ENCODE measurements at regions of chr5 and their contacts with region 1.

Region 1: DNA sequence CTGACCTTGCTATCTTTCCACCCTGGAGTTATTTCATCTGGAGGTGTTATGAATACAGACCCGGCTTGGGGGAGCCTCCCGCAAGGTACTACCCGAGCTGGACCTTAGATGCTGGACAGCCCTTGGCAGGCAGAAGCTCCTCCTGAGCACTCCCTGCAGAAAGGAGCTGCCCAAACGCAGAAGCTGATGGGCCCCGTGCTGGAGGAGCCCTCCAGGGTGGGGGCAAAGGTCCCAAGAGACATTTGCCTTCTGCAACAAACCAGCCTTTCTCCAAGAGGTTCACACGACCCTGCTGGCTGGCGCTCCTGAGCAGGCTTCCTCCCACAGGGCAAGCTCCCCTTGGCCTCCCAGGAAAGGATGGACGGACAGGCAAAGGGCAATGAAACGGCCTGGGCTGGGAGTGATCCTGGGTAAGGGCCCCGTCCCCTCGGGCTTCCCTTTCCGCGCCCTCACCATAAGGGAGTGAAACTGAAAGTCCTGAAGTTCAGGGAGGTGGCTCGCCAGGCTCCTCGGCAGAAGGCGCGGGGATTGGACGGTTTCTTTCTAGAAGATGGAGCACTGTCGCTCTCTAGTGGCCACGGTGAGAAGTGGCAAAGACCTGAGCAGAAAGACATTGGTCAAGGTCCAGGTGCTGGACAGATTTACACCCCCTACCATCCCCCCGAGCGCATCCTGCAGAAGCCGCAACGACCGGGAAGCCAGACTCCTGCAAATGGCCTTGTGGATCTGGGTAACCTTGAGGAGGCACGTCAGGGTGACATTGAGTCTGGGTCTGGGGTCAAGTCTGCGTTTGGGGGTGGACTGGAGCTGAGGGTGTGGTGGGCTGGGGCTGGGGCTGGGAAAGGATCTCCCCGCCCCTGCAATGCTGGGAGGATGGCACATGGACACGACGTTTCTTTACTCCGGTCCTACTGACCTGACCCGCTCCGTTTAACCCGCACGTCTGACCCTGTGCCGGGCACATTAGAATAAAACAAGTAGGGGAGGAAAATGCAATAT is 56.4 kb downstream of the NEURL1B start:
- DNase-seq: peak; percentile 94
- H3K4me3 Mint-ChIP-seq: peak overlapping the region; percentile 82
- H3K27ac Mint-ChIP-seq: peak overlapping the region; percentile 82
- H3K4me1 Mint-ChIP-seq: peaks cover 17% of the 10 kb centered on the region
- H3K27me3 Mint-ChIP-seq: peaks cover 14% of the 10 kb centered on the region
- CTCF ChIP-seq: peak; percentile 99

Region 2: DNA sequence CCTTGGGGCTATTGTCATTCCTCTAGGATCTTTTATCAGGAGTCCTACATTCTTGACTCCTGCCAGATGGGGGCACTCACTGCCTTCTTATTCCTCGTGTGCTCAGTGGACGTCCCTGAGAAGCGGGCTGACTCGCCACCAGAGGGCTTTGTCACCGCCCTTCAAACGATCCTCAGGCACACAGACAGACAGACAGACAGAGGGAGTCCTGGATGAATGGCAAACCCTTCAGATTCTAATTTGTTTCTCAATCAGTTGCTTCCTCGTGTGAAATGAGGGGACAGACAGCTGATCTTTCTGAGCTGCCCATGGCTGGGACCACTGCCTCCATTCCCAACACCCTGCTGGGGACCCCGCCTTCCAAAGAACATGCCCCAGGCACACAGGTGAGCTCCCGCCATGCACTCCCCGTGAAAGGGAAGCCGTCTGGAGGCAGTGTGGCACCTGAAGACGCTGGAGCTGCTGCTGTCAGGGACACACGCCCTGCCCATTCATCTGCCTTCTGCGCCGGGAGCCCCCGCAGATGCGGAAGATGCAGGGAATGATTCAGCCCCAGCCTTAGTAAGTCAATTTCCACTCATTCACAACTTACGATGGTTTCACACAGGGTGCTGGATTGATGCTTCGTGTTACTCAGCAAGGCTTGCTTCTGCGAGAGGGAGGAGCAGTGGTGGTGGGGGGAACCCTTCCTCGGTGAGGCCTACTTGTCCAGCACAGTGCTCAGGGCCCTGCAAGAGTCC is 218.2 kb before region 1 on chr5:
- CTCF ChIA-PET with region 1: interaction called, 452 read pairs
- POLR2A ChIA-PET with region 1: interaction called, 9 read pairs
- intact Hi-C with region 1: loop called (anchors 1 kb)
- DNase-seq: peak; percentile 98
- H3K4me3 Mint-ChIP-seq: no peak overlapping the region
- H3K27ac Mint-ChIP-seq: no peak overlapping the region
- H3K4me1 Mint-ChIP-seq: peaks cover 25% of the 10 kb centered on the region
- H3K27me3 Mint-ChIP-seq: no peaks in the 10 kb centered on the region
- CTCF ChIP-seq: peak; percentile 92

Region 3: DNA sequence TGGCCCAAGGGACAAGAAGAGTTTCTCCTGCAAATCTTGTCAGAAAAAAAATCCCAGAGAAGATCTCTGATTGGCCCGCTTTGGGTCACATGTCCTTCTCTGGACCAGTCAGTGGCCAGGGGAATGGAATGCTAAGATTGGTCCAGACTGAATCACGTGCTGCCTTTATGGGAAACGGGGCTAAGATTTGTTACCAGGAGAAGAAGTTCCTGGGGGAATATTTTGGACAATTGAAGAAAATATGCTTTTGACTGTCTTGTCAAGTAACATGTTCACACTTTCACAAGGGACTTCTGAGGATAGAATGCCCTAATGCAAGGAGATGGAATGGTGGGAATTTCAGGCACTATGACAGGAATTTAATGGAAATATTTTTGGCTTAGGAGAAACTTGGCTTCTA is 169.0 kb before region 1 on chr5:
- CTCF ChIA-PET with region 1: interaction called, 16 read pairs
- POLR2A ChIA-PET with region 1: interaction called, 6 read pairs
- intact Hi-C with region 1: no loop called
- DNase-seq: no peak
- H3K4me3 Mint-ChIP-seq: no peak overlapping the region
- H3K27ac Mint-ChIP-seq: no peak overlapping the region
- H3K4me1 Mint-ChIP-seq: peaks cover 14% of the 10 kb centered on the region
- H3K27me3 Mint-ChIP-seq: no peaks in the 10 kb centered on the region
- CTCF ChIP-seq: no peak

Region 4: DNA sequence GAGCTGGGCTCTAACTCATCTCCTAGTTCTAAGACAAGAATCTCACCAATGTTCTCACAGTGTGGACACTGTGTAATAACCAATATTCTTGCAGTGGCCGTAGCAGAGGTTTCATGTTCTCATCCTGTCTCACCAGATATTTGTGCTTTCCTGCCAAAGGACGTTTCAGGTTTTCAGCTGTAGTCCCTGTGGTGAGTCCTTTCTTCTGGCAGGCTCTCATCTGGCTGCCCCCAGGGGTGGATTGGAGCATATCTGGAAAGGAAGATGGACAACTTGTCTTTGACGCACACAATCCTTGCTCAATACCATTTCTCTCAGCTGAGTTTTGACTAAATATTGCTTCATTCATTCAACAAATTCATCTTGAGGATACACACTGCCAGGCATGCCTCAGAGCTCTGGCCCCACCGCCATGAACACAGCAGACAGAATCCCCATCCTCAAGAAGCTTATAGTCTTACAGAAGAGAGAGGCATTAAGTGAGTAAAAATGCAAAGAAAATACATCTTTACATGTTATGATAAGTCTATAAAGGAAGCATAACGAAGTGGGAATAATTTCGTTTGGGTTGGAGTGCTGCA is 90.1 kb before region 1 on chr5:
- CTCF ChIA-PET with region 1: interaction called, 13 read pairs
- POLR2A ChIA-PET with region 1: no interaction called
- intact Hi-C with region 1: no loop called
- DNase-seq: peak; percentile 98
- H3K4me3 Mint-ChIP-seq: peak overlapping the region; percentile 1
- H3K27ac Mint-ChIP-seq: peak overlapping the region; percentile 40
- H3K4me1 Mint-ChIP-seq: peaks cover 10% of the 10 kb centered on the region
- H3K27me3 Mint-ChIP-seq: no peaks in the 10 kb centered on the region
- CTCF ChIP-seq: no peak

Region 5: GRCh38 chr5:172659909-172660628 is 37.4 kb before region 1 on chr5:
- CTCF ChIA-PET with region 1: interaction called, 11 read pairs
- POLR2A ChIA-PET with region 1: interaction called, 3 read pairs
- intact Hi-C with region 1: no loop called
- DNase-seq: no peak
- H3K4me3 Mint-ChIP-seq: no peak overlapping the region
- H3K27ac Mint-ChIP-seq: peak overlapping the region; percentile 3
- H3K4me1 Mint-ChIP-seq: peaks cover 15% of the 10 kb centered on the region
- H3K27me3 Mint-ChIP-seq: no peaks in the 10 kb centered on the region
- CTCF ChIP-seq: no peak

Region 6: DNA sequence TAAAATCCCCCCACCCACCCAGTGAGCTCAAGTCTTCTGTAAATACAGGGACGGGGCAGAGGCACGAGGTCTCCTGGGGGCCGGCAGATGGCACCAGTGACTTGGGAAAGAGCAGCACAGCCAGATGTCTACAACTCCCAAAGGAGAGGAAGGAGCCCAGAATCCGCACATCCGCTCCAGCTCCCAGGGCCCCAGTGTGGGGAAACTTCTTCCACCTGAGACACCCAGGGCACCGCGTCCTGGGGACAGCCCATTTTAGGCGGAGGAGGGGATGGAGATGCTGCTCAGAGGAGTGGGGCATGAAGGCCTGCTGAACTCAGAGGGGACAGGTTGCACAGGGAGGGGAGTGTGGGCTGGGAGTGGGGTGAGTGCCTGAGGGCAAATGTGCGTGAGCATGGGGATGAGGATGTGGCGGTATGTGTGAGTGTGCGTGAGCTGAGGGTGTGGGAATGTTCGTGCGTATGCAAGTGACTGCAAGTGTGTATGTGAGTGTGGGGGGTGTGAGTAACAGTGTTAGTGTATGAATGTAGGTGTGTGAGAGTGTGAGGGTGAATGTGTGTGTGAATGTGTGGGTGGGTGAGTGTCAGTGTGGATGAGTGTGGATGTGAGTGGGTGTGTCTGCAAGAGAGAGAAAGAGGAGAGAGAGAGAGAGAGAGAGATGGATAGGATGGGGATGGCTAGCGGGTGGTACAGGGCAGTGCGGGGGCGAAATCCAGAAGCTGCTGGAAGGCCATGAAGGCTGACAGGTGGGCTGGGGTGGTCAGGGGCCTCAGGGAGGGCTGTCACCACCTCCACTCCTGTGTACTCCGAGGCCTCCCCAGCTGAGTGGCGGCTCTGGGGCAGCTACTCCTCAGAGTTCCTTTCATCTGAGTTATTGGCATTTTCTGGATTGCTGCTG is 10.1 kb after region 1 on chr5:
- CTCF ChIA-PET with region 1: interaction called, 32 read pairs
- POLR2A ChIA-PET with region 1: interaction called, 8 read pairs
- intact Hi-C with region 1: no loop called
- DNase-seq: peak; percentile 89
- H3K4me3 Mint-ChIP-seq: no peak overlapping the region
- H3K27ac Mint-ChIP-seq: no peak overlapping the region
- H3K4me1 Mint-ChIP-seq: peaks cover 7% of the 10 kb centered on the region
- H3K27me3 Mint-ChIP-seq: no peaks in the 10 kb centered on the region
- CTCF ChIP-seq: peak; percentile 88

Region 7: DNA sequence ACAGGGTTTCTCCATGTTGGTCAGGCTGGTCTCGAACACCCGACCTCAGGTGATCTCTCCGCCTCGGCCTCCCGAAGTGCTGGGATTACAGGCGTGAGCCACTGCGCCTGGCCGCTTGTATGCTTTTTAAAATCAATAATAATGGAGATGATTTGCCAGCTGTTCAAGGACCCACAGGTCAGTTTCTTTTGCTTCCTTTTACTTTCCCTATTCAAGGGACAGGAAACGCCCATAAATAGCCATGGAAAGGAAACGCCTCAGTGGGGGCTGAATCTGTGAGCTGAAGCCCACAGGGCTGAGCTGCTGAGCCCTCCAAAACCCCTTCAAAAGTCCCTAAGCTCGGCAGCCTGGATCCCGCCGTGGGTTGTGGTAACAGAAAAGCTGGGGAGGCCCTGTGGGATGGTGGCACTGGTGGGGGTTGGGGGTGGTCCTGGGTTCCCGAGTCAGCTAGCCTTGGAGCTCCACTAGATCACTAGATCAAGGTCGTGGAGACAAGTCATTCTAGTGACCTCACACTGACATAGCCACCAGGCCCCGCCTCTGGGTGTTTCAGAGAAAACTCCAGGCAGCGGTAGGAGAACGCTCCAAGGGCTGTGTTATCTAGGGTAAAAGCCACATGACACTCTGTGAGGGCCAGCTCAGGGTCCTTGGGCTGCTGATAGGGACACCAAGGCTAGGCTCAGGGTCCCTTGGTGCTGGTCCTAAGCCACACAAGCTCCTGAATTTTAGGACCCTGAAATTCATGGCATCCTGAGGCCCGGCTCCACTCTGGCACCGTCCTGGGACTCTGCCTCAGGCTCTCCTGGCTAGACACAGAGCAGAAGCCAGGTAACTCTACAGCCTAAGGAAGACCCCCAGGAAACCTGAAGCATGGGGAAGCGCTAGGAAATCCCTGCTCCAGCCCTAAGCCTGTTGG is 91.6 kb after region 1 on chr5:
- CTCF ChIA-PET with region 1: no interaction called
- POLR2A ChIA-PET with region 1: no interaction called
- intact Hi-C with region 1: no loop called
- DNase-seq: no peak
- H3K4me3 Mint-ChIP-seq: no peak overlapping the region
- H3K27ac Mint-ChIP-seq: no peak overlapping the region
- H3K4me1 Mint-ChIP-seq: peaks cover 2% of the 10 kb centered on the region
- H3K27me3 Mint-ChIP-seq: no peaks in the 10 kb centered on the region
- CTCF ChIP-seq: no peak

Measured in MCF 10A (cell line).